Sigmoid colon (tissue), 7 donors: ENCODE measurements at regions of chr10 and their contacts with region 1.

Region 1: GRCh38 chr10:22988581-22989360 is 60.9 kb downstream of the ARMC3 start:
- DNase-seq: peak; percentile 73
- H3K4me3 ChIP-seq: no peak overlapping the region
- H3K27ac ChIP-seq: no peak overlapping the region
- H3K4me1 ChIP-seq: peaks cover 0 to 11% (median 4%) of the 10 kb centered on the region in 4 donors
- H3K27me3 ChIP-seq: no peaks in the 10 kb centered on the region
- CTCF ChIP-seq: peak; percentile 78 to 89 (median 85)
- EP300 ChIP-seq: no peak
- POLR2A ChIP-seq: no peak

Region 2: DNA sequence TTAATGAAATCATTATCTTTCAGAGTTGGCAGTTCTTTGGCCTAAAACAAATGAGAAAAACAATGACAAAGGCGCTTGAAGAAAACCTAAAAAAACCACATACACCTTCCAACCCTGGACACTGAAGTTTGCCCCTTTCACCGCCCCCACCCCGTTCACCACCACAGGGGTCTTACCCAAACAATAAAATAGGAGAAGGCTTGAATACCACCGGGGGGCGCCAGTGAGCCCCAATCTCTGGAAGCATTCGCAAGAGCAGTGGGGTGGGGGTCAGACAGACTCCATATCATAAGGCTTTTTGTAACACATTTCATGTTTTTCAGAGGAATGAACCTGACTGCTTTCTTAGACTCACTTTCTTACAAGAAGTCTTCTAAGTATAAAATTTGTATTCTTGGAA is 438.0 kb before region 1 on chr10:
- intact Hi-C with region 1: loop called (anchors 5 kb)
- DNase-seq: no peak
- H3K4me3 ChIP-seq: no peak overlapping the region
- H3K27ac ChIP-seq: no peak overlapping the region
- H3K4me1 ChIP-seq: peaks cover 0 to 14% (median 6%) of the 10 kb centered on the region in 4 donors
- H3K27me3 ChIP-seq: no peaks in the 10 kb centered on the region
- CTCF ChIP-seq: peak in 3 of 4 experiments; percentile 10 to 45 (median 28)
- EP300 ChIP-seq: no peak
- POLR2A ChIP-seq: no peak